Cardiac septum (tissue), 1 donor: ENCODE measurements at regions of chr20 and their contacts with region 1.

Region 1: GRCh38 chr20:5100684-5101347 is 18.9 kb downstream of the PCNA start:
- DNase-seq: peak; percentile 87

Region 2: DNA sequence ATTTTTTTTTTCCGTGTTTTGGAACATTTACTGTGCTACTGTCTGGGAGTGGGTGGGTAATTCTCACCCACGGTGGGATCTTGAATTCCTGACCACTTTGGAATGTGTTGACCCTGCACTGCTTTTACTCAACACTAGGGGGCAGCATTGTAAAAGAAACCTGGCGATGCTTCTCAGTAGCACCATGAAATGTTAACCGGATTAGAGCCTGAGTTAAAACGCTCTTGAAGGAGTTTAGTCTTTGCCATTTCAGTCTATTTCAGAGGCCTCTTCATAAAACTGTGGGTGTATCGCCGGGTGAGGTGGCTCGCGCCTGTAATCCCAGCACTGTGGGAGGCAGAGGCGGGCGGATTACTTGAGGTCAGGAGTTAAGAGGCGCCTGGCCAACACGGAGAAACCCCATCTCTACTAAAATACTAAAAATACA is 493.5 kb before region 1 on chr20:
- intact Hi-C with region 1: loop called (anchors 5 kb)
- DNase-seq: no peak

Region 3: DNA sequence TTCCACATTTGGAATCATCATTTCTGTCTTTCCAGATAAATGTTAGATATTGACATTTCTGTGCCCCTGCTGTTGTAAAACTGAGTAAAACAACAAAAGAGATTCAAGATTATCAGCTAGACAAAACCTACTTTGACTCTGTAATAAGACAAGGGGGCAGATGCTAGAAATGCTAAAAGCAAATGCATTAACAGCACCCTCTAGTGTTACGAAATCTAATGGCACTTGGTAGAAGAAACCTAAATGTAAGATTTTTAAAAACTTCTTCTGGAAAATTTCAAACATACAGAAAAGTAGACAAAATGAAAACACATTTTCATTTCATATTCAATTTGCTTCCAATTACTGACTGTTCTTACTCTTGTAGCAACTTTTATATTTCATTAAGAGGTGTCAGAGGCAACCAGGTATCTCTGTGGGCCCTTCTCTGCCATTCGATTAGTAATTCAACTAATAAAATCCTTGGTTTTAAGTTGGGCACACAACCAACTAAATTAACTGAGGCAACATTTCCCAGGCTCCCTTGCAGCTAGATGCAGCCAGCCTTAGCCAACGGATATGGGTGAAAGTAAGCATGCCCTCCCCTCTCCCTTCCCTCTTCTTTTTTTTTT is 144.5 kb before region 1 on chr20:
- intact Hi-C with region 1: loop called (anchors 5 kb)
- DNase-seq: no peak

Region 4: DNA sequence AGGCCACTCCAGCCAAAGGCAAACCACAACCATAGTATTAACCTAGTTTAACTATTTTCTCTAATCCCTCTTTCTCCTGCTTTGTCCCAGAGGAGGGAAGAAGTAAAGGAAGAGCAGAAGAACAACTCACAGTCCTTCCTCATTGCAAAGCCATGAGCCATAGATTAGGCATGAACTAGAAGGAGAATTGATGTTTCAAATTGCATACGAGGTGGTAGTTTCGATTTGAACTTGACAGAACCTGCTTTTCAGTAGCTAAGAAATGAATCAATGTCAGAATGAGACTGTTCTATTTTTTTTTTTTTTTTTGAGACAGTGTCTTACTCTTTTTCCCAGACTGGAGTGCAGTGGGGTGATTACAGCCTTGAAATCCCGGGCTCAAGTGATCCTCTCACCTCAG is 167.6 kb after region 1 on chr20:
- intact Hi-C with region 1: no loop called
- DNase-seq: no peak